Activated CD4-positive, alpha-beta memory T cell treated with anti-CD3 and anti-CD28 coated beads, Interleukin-2, amount 10 ng/mL, durations not matched to agents 7 days and 5 days (primary cell): ENCODE measurements at regions of chr7 and their contacts with region 1.

Region 1: DNA sequence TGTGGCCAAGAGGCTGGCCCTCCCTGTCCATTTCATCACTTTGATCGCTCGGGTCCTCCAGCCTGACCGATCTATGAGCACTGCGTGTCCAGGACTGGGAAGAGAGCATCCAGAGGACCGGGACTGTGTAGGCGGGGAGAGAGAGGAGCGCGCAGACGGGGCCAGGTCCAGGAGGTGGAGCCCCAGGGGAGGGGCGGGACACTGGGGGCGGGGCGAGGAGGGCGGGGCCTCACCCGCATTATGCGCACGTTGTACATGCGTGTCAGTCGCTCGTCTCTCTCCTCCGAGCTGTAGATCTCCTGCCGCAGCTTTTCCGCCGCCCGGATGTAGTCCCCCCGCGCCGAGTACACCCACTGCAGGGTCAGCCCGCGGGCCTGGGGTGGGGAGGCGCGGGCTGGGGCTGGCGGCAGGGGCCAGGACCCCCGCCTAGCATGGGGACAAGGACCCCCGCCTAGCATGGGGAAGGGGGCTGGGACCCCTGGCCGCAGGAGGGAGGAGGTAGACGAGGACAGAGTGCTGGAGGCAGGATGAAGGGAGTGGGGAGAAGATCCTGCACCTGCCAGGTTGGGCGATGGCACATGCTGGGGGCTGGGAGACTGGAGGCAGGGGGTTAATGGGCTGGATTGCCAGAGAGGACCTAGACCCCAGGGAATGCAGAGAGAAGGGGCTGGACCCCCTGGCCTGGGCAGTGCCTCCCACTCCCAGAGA is 14.3 kb downstream of the MOSPD3 start:
- DNase-seq: peak; percentile 94
- H3K4me3 Mint-ChIP-seq: peak overlapping the region; percentile 76
- H3K27ac Mint-ChIP-seq: peak overlapping the region; percentile 86
- H3K4me1 Mint-ChIP-seq: peaks cover 74% of the 10 kb centered on the region
- H3K27me3 Mint-ChIP-seq: no peaks in the 10 kb centered on the region

Region 2: DNA sequence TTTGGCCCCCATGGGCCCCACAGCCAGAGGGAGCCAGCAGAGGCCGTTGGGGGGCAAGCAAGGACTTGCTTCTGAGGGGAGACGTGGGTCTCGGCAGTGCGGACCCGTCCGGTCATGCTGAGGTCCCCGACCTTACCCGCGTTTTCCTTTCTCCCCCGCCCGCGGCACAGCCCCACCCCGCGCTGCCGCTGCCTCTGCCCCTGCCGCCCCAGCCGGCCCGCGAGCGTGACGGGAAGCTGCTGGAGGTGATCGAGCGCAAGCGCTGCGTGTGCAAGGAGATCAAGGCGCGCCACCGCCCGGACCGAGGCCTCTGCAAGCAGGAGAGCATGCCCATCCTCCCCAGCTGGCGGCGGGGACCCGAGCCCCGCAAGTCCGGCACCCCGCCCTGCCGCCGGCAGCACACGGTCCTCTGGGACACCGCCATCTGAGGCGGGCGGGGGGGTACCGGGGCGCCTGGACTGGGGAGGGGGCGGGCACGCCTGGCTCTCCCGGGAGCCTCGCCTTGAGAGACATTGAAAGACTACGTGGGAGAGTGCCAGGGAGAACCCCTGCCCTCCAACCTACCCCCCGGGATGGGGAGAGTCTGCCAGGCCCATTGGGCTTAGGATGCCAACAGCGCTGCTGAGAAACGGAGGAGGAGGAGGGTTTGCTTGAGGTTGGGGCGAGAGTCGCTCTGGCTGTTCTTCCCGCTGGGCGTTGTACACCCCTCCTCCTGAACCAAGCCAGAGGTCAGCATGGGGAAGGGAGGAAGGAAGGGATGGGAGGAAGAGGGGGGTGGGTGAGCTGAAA is 133.0 kb before region 1 on chr7:
- CTCF ChIA-PET with region 1: no interaction called
- POLR2A ChIA-PET with region 1: no interaction called
- DNase-seq: peak; percentile 66
- H3K4me3 Mint-ChIP-seq: peak overlapping the region; percentile 48
- H3K27ac Mint-ChIP-seq: no peak overlapping the region
- H3K4me1 Mint-ChIP-seq: peaks cover 13% of the 10 kb centered on the region
- H3K27me3 Mint-ChIP-seq: peaks cover 17% of the 10 kb centered on the region

Region 3: DNA sequence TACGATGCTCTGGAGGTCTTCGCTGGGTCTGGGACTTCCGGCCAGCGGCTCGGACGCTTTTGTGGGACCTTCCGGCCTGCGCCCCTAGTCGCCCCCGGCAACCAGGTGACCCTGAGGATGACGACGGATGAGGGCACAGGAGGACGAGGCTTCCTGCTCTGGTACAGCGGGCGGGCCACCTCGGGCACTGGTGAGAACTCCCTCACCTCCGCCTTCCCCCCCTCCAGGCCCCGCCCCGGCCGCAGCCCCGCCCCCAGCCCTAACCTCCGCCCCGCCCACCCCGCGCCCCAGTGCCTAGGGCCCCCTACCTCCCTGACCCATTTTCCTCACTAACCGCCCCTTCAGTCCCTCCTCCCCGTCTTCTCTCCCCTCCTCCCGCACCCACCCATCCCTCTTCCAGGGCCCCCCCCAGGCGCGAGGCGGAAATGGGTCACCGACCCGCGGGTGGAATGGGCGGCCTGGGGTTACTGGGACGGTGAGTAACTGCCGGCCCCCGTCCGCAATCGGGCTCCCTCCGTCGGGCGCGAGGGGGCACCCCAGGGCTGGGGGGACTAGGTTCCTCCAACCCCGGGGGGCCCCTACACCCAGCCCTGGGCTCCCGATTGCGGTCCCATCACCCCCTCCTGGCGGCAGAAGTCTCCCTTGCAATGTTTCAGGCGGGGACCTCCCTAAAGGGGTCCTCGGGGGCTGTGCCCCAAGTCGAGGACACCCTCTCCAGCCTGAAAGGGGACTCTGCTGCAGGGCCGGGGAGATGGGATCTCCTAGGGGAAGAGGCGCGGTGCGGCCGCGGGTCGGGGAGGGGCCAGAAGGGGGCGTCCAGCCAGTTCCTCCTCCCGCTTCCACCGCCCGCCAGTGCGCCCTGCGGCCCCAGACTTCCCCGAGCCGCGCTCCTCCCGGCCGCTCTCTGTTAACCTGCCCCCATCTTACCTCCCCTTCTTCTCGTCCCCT is 22.4 kb before region 1 on chr7:
- CTCF ChIA-PET with region 1: interaction called, 163 read pairs
- POLR2A ChIA-PET with region 1: interaction called, 32 read pairs
- DNase-seq: peak; percentile 85
- H3K4me3 Mint-ChIP-seq: peak overlapping the region; percentile 82
- H3K27ac Mint-ChIP-seq: peak overlapping the region; percentile 86
- H3K4me1 Mint-ChIP-seq: peaks cover 37% of the 10 kb centered on the region
- H3K27me3 Mint-ChIP-seq: peaks cover 3% of the 10 kb centered on the region

Region 4: GRCh38 chr7:100673300-100673941 is 46.7 kb after region 1 on chr7 and contains the start of gene GNB2:
- CTCF ChIA-PET with region 1: interaction called, 5 read pairs
- POLR2A ChIA-PET with region 1: interaction called, 10 read pairs
- DNase-seq: peak; percentile 99
- H3K4me3 Mint-ChIP-seq: peak within 1 kb of the TSS; percentile 98
- H3K27ac Mint-ChIP-seq: peak within 1 kb of the TSS; percentile 93
- H3K4me1 Mint-ChIP-seq: peaks cover 21% of the 10 kb centered on the region
- H3K27me3 Mint-ChIP-seq: peaks cover 10% of the 10 kb centered on the region
- total RNA-seq, gene GNB2: 263 to 266 TPM